ENCODE measurements at regions of chr4 and their contacts with region 1.

Region 1: DNA sequence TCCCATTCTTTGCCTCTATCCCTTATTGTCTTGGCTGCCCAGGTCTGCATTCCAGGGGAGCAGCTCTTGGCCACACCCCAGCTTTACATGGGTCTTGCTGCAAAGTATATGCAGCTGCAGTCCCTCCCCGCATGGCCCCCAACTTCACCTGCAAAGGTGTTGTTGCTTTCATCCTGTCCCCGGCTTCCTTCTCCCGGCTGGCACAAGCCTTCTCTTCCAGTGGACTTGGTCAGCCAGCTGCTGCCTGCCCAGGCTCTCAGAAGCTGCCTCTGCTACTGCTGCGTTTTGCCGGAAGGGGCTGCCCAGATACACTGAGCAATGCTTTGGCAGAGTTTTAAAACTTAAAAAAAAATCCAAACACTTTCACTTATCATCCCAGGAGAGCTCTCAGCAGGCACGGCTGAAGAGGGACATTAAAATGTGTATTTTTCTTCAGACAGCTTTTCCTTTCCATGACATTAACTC is 121.2 kb upstream of the PDLIM3 start:
- DNase-seq: peak; percentile 25
- H3K4me3 ChIP-seq: peak overlapping the region; percentile 9 to 43 (median 24)
- H3K27ac ChIP-seq: peak overlapping the region; percentile 63 to 82 (median 76)
- H3K4me1 ChIP-seq: peaks cover 0 to 11% (median 9%) of the 10 kb centered on the region in 4 donors
- H3K27me3 ChIP-seq: no peaks in the 10 kb centered on the region
- CTCF ChIP-seq: peak in 3 of 5 experiments; percentile 22 to 46 (median 27)
- EP300 ChIP-seq: no peak
- POLR2A ChIP-seq: peak; percentile 20

Region 2: GRCh38 chr4:185792384-185793115 is 136.1 kb after region 1 on chr4:
- in situ Hi-C with region 1: no loop called
- intact Hi-C with region 1: loop called (anchors 10 kb)
- DNase-seq: no peak
- H3K4me3 ChIP-seq: no peak overlapping the region
- H3K27ac ChIP-seq: peak overlapping the region in 3 of 4 donors; percentile 38 to 48 (median 44)
- H3K4me1 ChIP-seq: no peaks in the 10 kb centered on the region
- H3K27me3 ChIP-seq: no peaks in the 10 kb centered on the region
- CTCF ChIP-seq: no peak
- EP300 ChIP-seq: no peak
- POLR2A ChIP-seq: no peak